AG04449 (cell line): ENCODE measurements at regions of chr15 and their contacts with region 1.

Region 1: DNA sequence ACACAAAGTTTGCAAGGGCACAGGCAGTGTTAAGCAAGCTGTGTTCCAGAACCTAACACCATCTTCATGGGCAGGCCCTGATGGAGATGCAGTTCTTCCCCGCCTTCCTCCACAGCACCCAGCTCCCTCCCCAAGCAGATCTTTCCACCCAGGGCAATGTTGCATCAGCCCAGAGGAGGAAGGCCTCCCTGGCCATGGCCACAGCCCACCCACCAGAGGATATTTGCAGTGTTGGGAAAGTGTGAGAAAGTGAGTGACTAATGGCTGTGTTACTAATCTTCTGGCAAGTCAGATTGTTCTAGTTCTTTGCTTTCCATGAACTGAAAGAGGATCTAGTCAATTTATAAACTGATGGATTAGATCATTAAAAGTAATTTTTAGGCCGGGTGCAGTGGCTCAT is 42.0 kb upstream of the ATP10A start:
- DNase-seq: peak; percentile 68
- H3K4me3 ChIP-seq: no peak overlapping the region
- CTCF ChIP-seq: no peak

Region 2: GRCh38 chr15:25875566-25875965 is 29.6 kb before region 1 on chr15:
- CTCF ChIA-PET with region 1: no interaction called
- POLR2A ChIA-PET with region 1: no interaction called
- DNase-seq: no peak
- H3K4me3 ChIP-seq: no peak overlapping the region
- CTCF ChIP-seq: no peak

Region 3: GRCh38 chr15:25892126-25892525 is 13.0 kb before region 1 on chr15:
- CTCF ChIA-PET with region 1: interaction called, 16 read pairs
- POLR2A ChIA-PET with region 1: no interaction called
- DNase-seq: no peak
- H3K4me3 ChIP-seq: no peak overlapping the region
- CTCF ChIP-seq: no peak

Region 4: DNA sequence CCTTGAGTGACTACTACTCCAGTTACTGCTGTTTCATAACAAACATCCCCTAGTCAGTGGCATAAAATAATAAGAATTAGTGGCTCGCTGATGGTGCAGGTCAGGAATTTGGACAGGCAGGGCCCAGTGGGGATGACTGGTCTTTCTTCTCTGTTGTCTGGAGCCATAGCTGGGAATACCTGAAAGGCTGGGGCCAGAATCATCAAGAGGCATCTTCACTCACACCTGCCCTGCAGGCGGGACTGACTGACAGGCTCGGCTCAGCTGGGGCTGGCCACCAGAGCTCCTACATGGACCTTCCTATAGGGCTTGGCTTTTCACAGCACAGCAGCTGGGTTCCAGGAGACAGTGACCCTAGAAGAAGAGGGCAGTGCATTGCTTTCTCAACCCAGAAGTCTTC is 106.8 kb after region 1 on chr15:
- CTCF ChIA-PET with region 1: no interaction called
- POLR2A ChIA-PET with region 1: no interaction called
- DNase-seq: no peak
- H3K4me3 ChIP-seq: no peak overlapping the region
- CTCF ChIP-seq: no peak